A549 (cell line): ENCODE measurements at regions of chr12 and their contacts with region 1.

Region 1: DNA sequence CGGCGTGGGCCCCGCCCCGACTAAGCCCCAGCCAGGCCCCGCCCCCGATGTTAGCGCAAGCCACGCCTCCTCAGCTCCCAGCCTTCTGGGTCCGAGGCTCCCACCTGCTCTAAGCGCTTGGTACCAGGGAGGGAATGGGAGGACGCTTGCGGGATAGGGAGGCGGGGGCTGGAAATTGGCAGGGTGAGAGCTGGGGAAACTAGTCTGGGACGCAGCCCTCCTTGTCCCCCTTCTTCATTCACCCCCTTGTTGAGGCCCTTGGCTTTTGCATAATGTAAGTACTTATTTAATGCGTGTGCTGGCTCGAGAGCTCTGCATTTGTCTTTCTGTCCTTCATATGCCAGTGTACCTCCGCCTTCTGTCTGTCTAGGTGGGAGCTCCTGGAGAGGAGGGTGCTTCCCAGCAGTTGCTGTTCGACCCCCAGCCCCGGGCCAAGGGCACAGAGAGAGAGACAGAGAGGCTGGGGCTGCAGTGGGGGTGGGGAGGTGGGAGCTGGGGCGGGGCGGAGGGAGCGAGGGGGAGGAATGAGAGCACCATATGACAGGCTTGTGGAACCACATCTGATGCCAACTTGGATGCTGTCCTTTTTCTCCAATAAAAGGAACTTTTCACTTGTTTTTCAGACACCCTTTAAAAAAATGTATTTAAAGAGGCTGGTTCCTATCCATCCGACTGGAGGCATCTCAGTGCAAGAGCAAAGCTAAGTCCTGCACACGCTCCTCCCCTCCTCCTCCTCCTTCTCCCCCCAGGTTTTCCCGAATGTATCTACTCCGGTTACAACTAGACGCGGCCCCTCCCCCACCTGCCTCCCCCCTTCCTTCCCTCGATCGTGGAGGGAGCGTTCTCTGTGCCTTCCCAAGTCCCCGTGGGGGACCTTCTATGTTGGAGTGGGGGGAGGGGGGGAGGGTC is 25.6 kb upstream of the MAP1LC3B2 start:
- DNase-seq: peak; percentile 87 to 95
- ATAC-seq: peak; percentile 85 to 88
- H3K4me3 ChIP-seq: peak overlapping the region; percentile 57
- H3K27ac ChIP-seq: peak overlapping the region; percentile 74 to 88
- H3K4me1 ChIP-seq: peaks cover 30% of the 10 kb centered on the region
- CTCF ChIP-seq: no peak
- EP300 ChIP-seq: no peak
- POLR2A ChIP-seq: no peak
- RAD21 ChIP-seq: no peak

Region 2: DNA sequence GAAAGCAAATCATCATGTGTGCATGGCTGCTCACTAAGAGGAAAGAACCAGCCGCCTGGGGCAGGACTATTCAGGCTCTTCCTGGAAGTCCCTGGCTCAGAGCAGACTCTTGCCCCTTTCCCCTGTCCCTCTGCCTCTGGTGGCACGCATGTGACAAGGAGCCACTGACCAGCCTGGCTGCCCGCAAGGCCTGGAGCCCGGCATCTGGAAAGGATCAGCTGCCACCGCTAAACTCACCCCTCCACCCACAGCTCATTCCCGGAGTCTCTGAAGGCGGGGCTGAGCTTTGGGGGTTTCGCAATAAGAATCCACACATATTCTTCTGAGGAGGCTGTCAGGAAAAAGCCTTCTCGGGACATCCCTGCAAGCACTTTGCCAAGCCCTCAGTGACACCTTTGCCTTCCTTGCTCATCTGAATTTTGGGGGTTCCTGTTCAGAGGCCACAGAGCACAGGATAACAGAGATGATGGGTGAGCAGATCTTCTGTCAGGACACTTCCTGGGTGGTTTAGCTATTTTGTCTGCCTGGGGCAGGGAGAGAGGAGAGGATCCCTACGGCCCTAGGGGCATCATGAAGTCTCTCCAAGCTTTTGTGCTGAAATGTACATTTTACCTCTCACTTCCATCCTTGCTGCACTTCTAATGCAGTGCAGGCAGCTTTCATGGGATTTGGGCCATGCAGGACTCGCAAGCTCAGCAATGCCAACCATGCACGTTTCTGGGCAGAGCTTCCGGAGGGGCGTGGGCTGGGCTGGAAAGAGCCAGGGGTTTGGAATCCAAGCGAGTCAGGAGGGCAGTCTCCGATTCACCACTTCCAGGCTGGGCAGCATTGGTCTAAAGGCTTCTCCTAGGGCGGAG is 99.2 kb before region 1 on chr12:
- CTCF ChIA-PET with region 1: no interaction called
- POLR2A ChIA-PET with region 1: interaction called, 16 read pairs
- DNase-seq: peak; percentile 81 to 93
- ATAC-seq: peak; percentile 91 to 96
- H3K4me3 ChIP-seq: peak overlapping the region; percentile 37
- H3K27ac ChIP-seq: peak overlapping the region; percentile 79 to 88
- H3K4me1 ChIP-seq: peaks cover 32% of the 10 kb centered on the region
- CTCF ChIP-seq: no peak
- EP300 ChIP-seq: no peak
- POLR2A ChIP-seq: peak; percentile 26
- RAD21 ChIP-seq: peak; percentile 39 to 51; a peak in 3 of 5 replicates

Region 3: GRCh38 chr12:116520801-116521471 is 12.7 kb before region 1 on chr12:
- CTCF ChIA-PET with region 1: no interaction called
- POLR2A ChIA-PET with region 1: no interaction called
- DNase-seq: no peak
- ATAC-seq: no peak
- H3K4me3 ChIP-seq: no peak overlapping the region
- H3K27ac ChIP-seq: peak overlapping the region in 1 of 2 experiments; percentile 68; a peak in 3 of 6 replicates
- H3K4me1 ChIP-seq: peaks cover 21% of the 10 kb centered on the region
- CTCF ChIP-seq: no peak
- EP300 ChIP-seq: no peak
- POLR2A ChIP-seq: no peak
- RAD21 ChIP-seq: no peak

Region 4: DNA sequence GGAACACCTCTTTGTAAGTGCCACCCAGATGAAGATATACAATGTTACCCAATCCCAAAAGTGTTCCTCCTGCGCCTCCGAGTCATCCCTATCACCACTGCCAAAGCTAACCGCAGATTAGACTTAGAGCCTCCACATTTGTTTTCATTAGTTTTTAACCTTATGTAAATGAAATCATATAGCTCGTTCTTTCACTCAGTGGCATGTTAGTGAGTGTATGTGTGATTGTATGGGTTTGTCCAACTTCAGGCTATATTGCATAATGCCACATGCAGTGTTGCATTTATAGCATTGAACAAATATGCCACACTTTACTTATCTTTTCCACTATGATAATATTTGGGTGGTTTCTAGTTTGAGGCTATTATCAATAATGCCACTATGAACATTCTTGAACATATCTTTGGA is 43.6 kb after region 1 on chr12:
- CTCF ChIA-PET with region 1: no interaction called
- POLR2A ChIA-PET with region 1: no interaction called
- DNase-seq: no peak
- ATAC-seq: no peak
- H3K4me3 ChIP-seq: no peak overlapping the region
- H3K27ac ChIP-seq: no peak overlapping the region
- H3K4me1 ChIP-seq: no peaks in the 10 kb centered on the region
- CTCF ChIP-seq: no peak
- EP300 ChIP-seq: no peak
- POLR2A ChIP-seq: no peak
- RAD21 ChIP-seq: no peak